GM10248 (cell line): ENCODE measurements at regions of chr9 and their contacts with region 1.

Region 1: GRCh38 chr9:97475059-97475458 is 26.4 kb upstream of the TMOD1 start:
- DNase-seq: no peak
- CTCF ChIP-seq: no peak

Region 2: GRCh38 chr9:97487107-97487506 is 12.0 kb after region 1 on chr9:
- CTCF ChIA-PET with region 1: interaction called, 74 read pairs
- POLR2A ChIA-PET with region 1: no interaction called
- DNase-seq: no peak
- CTCF ChIP-seq: no peak